ENCODE measurements at regions of chr6 and their contacts with region 1.

Region 1: GRCh38 chr6:33840048-33840926 is 36.5 kb upstream of the MLN start:
- DNase-seq: peak; percentile 90 to 94 (median 92)
- ATAC-seq: peak; percentile 90
- H3K4me3 ChIP-seq: no peak overlapping the region
- H3K27ac ChIP-seq: peak overlapping the region; percentile 96
- H3K4me1 ChIP-seq: peaks cover 44 to 52% of the 10 kb centered on the region in 2 experiments
- H3K27me3 ChIP-seq: no peaks in the 10 kb centered on the region
- CTCF ChIP-seq: no peak
- EP300 ChIP-seq: peak; percentile 90
- POLR2A ChIP-seq: peak; percentile 48
- RAD21 ChIP-seq: peak; percentile 6 to 17; a peak in 3 of 4 replicates

Region 2: GRCh38 chr6:33467091-33467490 is 373.2 kb before region 1 on chr6:
- CTCF ChIA-PET with region 1: no interaction called
- POLR2A ChIA-PET with region 1: no interaction called
- in situ Hi-C with region 1: no loop called
- intact Hi-C with region 1: no loop called
- DNase-seq: no peak
- ATAC-seq: no peak
- H3K4me3 ChIP-seq: no peak overlapping the region
- H3K27ac ChIP-seq: no peak overlapping the region
- H3K4me1 ChIP-seq: no peaks in the 10 kb centered on the region; a peak in 1 of 5 replicates
- H3K27me3 ChIP-seq: no peaks in the 10 kb centered on the region
- CTCF ChIP-seq: no peak
- EP300 ChIP-seq: no peak
- POLR2A ChIP-seq: no peak
- RAD21 ChIP-seq: no peak

Region 3: GRCh38 chr6:33771146-33772081 is 68.9 kb before region 1 on chr6:
- CTCF ChIA-PET with region 1: no interaction called
- POLR2A ChIA-PET with region 1: no interaction called
- in situ Hi-C with region 1: no loop called
- intact Hi-C with region 1: loop called (anchors 5 kb)
- DNase-seq: peak; percentile 87 to 95 (median 92)
- ATAC-seq: peak; percentile 95
- H3K4me3 ChIP-seq: no peak overlapping the region
- H3K27ac ChIP-seq: no peak overlapping the region
- H3K4me1 ChIP-seq: peaks cover 3 to 15% of the 10 kb centered on the region in 2 experiments; a peak in 3 of 5 replicates
- H3K27me3 ChIP-seq: peaks cover 9 to 35% of the 10 kb centered on the region in 2 experiments; a peak in 4 of 5 replicates
- CTCF ChIP-seq: peak; percentile 88 to 97 (median 91)
- EP300 ChIP-seq: no peak
- POLR2A ChIP-seq: no peak; the same call in 1 of the 2 replicates
- RAD21 ChIP-seq: peak; percentile 88 to 94

Region 4: DNA sequence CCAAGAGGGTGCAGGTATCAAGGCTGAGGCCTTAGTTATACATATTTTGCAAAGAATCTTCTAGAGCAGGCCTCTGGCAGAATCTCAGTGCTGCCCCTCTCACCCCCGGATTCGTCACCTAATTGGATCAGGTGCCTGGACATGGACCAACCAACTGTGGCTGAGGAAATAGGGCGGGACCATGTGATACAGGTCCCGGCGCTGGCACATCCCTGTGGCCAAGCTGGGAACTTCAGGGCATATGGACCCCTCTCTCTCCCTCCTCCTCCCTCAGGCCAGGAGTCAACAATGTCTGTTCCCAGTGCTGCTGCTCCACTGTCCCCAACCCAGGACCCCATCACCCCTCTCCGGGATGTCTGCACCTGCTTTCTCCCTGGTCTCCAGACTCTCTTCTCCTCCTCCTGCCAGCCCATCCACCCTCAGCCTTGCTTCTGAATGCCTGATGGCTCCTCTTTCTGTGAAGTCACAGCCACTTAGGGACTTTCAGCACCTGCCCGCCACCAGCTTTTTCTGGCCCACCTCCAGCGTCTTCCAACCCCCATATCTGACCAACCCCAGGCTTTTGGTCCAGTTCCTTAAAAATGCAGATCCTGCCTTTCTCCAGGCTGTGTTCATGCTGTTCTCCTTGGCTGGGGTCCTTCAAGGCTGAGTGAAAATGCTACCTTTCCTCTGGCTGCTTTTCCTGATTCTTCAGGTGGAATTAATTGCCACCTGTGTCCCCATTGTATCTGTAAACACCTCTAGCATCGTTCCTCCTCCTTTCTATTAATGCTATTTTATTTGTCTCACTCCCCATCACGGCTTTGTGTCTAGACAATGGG is 17.5 kb before region 1 on chr6:
- CTCF ChIA-PET with region 1: no interaction called
- POLR2A ChIA-PET with region 1: interaction called, 10 read pairs
- in situ Hi-C with region 1: no loop called
- intact Hi-C with region 1: no loop called
- DNase-seq: peak; percentile 71 to 92 (median 88)
- ATAC-seq: peak; percentile 97
- H3K4me3 ChIP-seq: no peak overlapping the region
- H3K27ac ChIP-seq: no peak overlapping the region
- H3K4me1 ChIP-seq: peaks cover 0 to 9% of the 10 kb centered on the region in 2 experiments; a peak in 2 of 5 replicates
- H3K27me3 ChIP-seq: peaks cover 14 to 77% of the 10 kb centered on the region in 2 experiments
- CTCF ChIP-seq: peak; percentile 61 to 66 (median 64)
- EP300 ChIP-seq: no peak
- POLR2A ChIP-seq: no peak
- RAD21 ChIP-seq: peak in 1 of 2 experiments; percentile 30; a peak in 2 of 4 replicates

Region 5: DNA sequence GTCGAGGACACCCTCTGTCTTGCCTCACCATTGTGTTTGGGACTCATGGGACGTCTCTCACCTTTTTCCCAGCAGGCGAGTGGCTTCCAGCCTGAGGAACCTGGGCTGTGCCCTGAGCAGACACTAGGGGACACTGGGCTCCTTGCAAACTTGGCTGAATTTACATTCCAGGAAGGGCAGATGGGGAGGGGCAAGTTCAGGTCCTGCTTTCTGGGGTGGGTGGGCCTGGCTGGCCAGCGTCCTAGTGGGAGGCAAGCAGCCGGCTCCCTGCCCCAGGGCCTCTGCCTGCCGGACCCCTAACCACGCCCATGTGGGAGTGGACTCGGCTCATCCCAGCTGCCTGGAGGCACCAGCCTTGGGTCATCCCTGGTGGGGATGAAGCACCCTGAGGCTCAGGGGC is 11.7 kb after region 1 on chr6:
- CTCF ChIA-PET with region 1: interaction called, 3 read pairs
- POLR2A ChIA-PET with region 1: interaction called, 11 read pairs
- in situ Hi-C with region 1: no loop called
- intact Hi-C with region 1: no loop called
- DNase-seq: peak; percentile 62 to 75 (median 70)
- ATAC-seq: peak; percentile 86
- H3K4me3 ChIP-seq: no peak overlapping the region
- H3K27ac ChIP-seq: no peak overlapping the region
- H3K4me1 ChIP-seq: peaks cover 4 to 22% of the 10 kb centered on the region in 2 experiments; a peak in 3 of 5 replicates
- H3K27me3 ChIP-seq: peaks cover 12 to 28% of the 10 kb centered on the region in 2 experiments; a peak in 2 of 5 replicates
- CTCF ChIP-seq: peak; percentile 78 to 87 (median 84)
- EP300 ChIP-seq: no peak
- POLR2A ChIP-seq: no peak
- RAD21 ChIP-seq: peak; percentile 33 to 73

Measured in K562 (cell line).